ENCODE measurements at regions of chr20 and their contacts with region 1.

Region 1: GRCh38 chr20:48265791-48266190 is 480.5 kb upstream of the SULF2 start:
- DNase-seq: no peak
- H3K4me3 ChIP-seq: no peak overlapping the region
- H3K27ac ChIP-seq: no peak overlapping the region
- H3K4me1 ChIP-seq: no peaks in the 10 kb centered on the region
- H3K27me3 ChIP-seq: no peaks in the 10 kb centered on the region
- CTCF ChIP-seq: no peak

Region 2: DNA sequence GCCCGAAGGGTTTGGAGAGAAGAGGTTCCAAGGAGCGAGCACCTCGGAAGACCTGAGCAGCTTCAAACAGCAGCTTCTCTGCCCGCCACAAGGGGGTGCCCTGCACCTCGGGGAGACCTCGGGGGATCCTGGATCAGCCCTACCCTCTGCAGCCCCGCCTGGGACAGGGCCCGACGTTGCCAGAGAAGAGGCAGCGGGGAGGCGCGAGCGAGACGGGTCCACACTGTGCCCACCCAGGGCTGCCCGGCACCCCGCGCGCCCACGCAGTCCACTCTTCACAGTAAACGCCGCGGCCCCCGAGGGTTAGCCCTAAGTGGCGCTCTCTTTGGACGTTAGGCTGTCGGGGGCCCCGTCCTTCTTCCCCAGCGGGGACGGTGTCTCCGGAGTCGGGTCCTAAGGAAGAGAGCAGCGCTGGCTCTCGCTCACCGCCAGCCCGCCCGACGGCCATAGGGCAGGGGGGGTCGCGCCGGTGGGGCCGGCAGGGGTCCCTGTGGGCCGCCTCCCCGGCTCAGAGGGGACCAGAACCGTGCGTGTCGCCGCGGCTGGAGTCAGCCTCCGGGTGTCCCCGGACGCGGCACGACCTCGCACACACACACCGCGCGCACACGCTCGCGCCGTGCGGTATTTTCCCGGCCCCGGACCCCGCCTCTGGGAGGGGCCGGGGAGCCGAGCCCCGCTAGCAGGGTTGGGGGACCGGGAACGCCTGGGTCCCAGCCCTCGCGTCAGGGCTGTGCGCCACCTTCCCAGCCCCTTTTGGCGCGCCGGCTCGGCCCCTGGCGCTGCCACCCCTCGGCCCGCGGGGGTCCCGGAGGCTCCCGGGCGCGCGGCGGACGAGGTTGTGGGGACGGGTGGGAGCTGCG is 1958.4 kb before region 1 on chr20:
- intact Hi-C with region 1: no loop called
- DNase-seq: peak in 1 of 2 donors; percentile 23
- H3K4me3 ChIP-seq: peak overlapping the region; percentile 34 to 50
- H3K27ac ChIP-seq: no peak overlapping the region
- H3K4me1 ChIP-seq: peaks cover 0 to 27% (median 21%) of the 10 kb centered on the region in 4 donors
- H3K27me3 ChIP-seq: peaks cover 0 to 99% of the 10 kb centered on the region in 2 donors
- CTCF ChIP-seq: peak; percentile 45 to 58

Region 3: GRCh38 chr20:48329635-48330277 is 64.0 kb after region 1 on chr20:
- intact Hi-C with region 1: loop called (anchors 5 kb)
- DNase-seq: no peak
- H3K4me3 ChIP-seq: no peak overlapping the region
- H3K27ac ChIP-seq: no peak overlapping the region
- H3K4me1 ChIP-seq: peaks cover 0 to 6% (median 0%) of the 10 kb centered on the region in 4 donors
- H3K27me3 ChIP-seq: peaks cover 0 to 32% of the 10 kb centered on the region in 2 donors
- CTCF ChIP-seq: no peak